Adrenal gland (tissue), 19 donors: ENCODE measurements at regions of chr12 and their contacts with region 1.

Region 1: GRCh38 chr12:48988030-48988649 is 10.0 kb downstream of the WNT1 start:
- DNase-seq: peak; percentile 57 to 82 (median 68)
- H3K4me3 ChIP-seq: no peak overlapping the region
- H3K27ac ChIP-seq: no peak overlapping the region
- H3K4me1 ChIP-seq: no peaks in the 10 kb centered on the region
- H3K27me3 ChIP-seq: peaks cover 15% of the 10 kb centered on the region
- CTCF ChIP-seq: peak; percentile 58 to 85 (median 73)
- POLR2A ChIP-seq: no peak

Region 2: GRCh38 chr12:48936379-48936979 is 51.7 kb before region 1 on chr12:
- intact Hi-C with region 1: loop called in 1 of 2 experiments (anchors 10 kb)
- DNase-seq: peak; percentile 51 to 84 (median 76)
- H3K4me3 ChIP-seq: no peak overlapping the region
- H3K27ac ChIP-seq: no peak overlapping the region
- H3K4me1 ChIP-seq: peaks cover 0 to 6% of the 10 kb centered on the region in 2 donors
- H3K27me3 ChIP-seq: no peaks in the 10 kb centered on the region
- CTCF ChIP-seq: peak; percentile 49 to 88 (median 78)
- POLR2A ChIP-seq: no peak

Region 3: DNA sequence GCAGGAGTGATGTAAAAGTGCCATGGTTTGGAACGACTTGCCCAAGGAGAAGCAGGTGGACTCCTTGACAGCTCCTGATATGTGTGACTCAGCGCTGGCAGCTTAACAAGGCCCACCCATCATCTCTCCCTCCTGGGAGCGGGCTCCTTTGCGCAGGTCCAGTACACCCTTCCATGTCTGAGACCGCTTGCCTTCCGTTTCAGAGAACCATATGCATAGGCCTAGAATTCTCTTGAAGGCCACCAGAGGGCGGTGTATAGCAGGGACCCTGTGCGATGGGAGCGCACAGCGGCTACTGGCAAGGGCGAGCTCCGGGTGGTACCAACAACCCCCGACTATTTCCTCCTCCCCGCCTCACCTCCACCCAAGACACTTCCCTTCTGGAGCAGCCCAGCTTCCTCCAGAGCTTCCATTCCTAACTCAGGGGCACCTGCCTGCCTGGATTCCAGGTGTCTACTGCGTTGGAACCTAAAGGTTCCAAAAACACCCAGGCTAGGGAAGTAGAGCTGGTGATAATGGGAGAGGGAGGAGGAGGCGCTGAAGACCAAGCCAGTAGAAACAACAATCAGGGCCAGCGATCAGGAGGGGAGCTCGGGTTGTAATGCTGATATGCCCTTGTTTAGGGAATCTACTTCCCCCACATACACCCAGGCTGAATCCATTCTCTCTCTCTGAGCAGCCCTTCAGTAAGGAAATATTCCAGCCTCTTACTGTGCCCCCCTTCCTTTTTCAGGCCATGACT is 100.2 kb after region 1 on chr12:
- intact Hi-C with region 1: no loop called
- DNase-seq: peak; percentile 74 to 86 (median 79)
- H3K4me3 ChIP-seq: no peak overlapping the region
- H3K27ac ChIP-seq: no peak overlapping the region
- H3K4me1 ChIP-seq: peaks cover 0 to 32% of the 10 kb centered on the region in 2 donors
- H3K27me3 ChIP-seq: peaks cover 13% of the 10 kb centered on the region
- CTCF ChIP-seq: peak; percentile 82 to 89 (median 86)
- POLR2A ChIP-seq: no peak

Region 4: DNA sequence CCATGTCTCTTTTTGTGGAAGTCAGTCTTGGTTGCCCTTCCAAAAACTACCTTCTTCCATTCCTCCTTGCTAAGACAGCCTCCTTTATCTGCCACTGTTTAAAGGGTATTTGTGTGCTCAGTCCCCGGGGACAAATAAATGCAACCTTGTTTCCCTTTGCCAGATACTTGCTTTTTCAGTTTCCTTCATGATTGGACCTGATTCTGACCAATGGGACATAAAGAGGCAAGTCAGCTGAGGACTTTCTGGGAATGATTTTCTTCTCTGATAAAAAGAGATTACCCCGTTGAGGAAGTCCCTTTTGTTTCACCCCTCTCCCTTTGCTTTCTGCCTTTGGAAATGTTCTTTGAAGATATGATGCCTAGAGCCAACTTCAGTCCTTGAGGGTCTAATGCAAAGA is 150.4 kb after region 1 on chr12:
- intact Hi-C with region 1: no loop called
- DNase-seq: no peak
- H3K4me3 ChIP-seq: no peak overlapping the region
- H3K27ac ChIP-seq: no peak overlapping the region
- H3K4me1 ChIP-seq: no peaks in the 10 kb centered on the region
- H3K27me3 ChIP-seq: no peaks in the 10 kb centered on the region
- CTCF ChIP-seq: no peak
- POLR2A ChIP-seq: no peak